ENCODE measurements at regions of chr9 and their contacts with region 1.

Region 1: GRCh38 chr9:116550696-116551436 is 136.2 kb upstream of the TRIM32 start:
- DNase-seq: no peak
- ATAC-seq: peak; percentile 53 to 80

Region 2: DNA sequence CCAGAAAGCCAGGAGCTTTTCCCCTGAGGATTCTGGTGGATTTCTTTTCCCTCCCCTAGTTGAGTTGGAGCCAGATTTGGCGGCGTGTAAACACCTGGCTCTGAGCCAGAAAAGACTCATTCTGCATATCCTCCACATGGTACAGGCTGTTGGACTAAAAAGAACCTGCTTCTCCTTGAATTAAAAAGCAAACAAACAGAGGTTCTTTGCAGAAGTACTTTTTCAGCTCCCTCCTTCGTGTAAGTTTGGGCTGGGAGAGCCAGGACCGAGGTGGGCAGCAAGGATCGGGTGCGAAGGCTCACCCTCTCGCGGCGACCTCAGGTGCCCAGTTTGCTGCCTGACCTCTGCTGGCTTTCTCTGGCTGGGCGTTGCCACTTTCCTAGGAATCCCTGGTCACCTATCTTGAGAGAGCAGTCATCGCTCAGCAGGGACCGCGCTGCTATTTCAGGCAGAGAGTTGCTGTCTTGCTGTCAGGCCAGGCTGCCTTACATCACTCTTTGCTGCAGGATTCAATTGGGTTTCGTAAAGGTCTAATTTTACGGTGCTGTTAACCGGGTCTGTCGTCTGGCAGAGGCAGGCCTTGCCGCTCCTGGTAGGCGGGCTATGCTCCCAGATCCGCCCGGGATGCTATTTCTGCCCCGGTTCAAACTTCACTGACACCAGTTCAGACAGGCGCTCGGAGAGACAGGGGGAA is 394.1 kb before region 1 on chr9:
- intact Hi-C with region 1: loop called in 1 of 2 experiments (anchors 5 kb)
- DNase-seq: peak; percentile 75
- ATAC-seq: peak; percentile 82 to 91

Measured in left cardiac atrium (tissue), 4 donors.